Endothelial cell of umbilical vein (primary cell): ENCODE measurements at regions of chr2 and their contacts with region 1.

Region 1: DNA sequence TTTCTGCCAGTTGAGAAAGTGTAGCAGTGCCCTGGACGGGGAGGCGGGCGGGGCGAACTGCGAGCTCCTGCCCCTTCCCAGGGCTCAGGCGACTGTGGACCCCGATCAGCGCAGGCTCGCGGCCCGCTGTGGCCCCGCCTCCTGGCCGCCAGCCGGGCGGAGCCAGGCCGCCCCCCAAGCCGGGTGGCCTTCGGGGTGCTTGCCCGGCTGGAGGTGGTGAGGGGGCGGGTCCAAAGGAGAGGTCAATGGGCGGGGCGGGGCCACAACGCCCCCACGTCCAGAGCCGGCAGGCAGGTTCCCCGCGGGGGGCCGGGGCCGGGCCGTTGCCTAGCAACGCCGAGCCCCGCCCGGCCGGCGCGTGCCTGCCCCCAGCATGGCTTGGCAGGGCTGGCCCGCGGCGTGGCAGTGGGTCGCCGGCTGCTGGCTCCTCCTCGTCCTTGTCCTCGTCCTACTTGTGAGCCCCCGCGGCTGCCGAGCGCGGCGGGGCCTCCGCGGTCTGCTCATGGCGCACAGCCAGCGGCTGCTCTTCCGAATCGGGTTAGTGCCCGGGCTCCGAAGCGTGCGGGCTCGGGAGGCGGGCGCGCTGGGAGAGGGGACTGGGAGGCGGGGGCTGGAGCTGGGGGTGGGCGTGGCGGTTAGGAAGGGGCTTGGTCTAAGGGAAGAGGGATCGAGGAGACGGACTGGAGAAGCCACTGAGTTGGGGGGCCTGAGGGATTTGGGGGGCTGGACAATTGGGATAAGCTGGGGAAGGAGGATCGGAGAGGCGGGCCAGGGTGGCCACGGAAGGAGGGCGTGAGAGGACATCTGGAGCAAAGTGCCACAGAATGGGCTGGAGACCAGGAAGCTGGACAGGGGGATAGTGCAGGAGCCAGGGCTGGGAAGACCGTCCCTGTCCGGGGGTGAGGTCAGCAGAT is 30.8 kb upstream of the TMBIM1 start:
- DNase-seq: peak; percentile 95
- H3K4me3 ChIP-seq: peak overlapping the region; percentile 49 to 71 (median 67)
- H3K27ac ChIP-seq: peak overlapping the region; percentile 91
- H3K4me1 ChIP-seq: peaks cover 24% of the 10 kb centered on the region
- H3K27me3 ChIP-seq: no peaks in the 10 kb centered on the region
- CTCF ChIP-seq: no peak
- POLR2A ChIP-seq: no peak

Region 2: GRCh38 chr2:216949700-216950413 is 1373.3 kb before region 1 on chr2:
- CTCF ChIA-PET with region 1: no interaction called
- POLR2A ChIA-PET with region 1: no interaction called
- dilution Hi-C with region 1: no loop called
- intact Hi-C with region 1: no loop called
- DNase-seq: no peak
- H3K4me3 ChIP-seq: no peak overlapping the region
- H3K27ac ChIP-seq: no peak overlapping the region
- H3K4me1 ChIP-seq: no peaks in the 10 kb centered on the region
- H3K27me3 ChIP-seq: no peaks in the 10 kb centered on the region
- CTCF ChIP-seq: no peak
- POLR2A ChIP-seq: no peak

Region 3: GRCh38 chr2:218292048-218293014 is 30.8 kb before region 1 on chr2 and contains the start of gene TMBIM1:
- CTCF ChIA-PET with region 1: interaction called, 6 read pairs
- POLR2A ChIA-PET with region 1: no interaction called
- dilution Hi-C with region 1: no loop called
- intact Hi-C with region 1: loop called (anchors 1 kb)
- DNase-seq: peak; percentile 69
- H3K4me3 ChIP-seq: peak within 1 kb of the TSS; percentile 69 to 79 (median 74)
- H3K27ac ChIP-seq: peak within 1 kb of the TSS; percentile 63
- H3K4me1 ChIP-seq: peaks cover 63% of the 10 kb centered on the region
- H3K27me3 ChIP-seq: no peaks in the 10 kb centered on the region
- CTCF ChIP-seq: peak; percentile 61 to 97
- POLR2A ChIP-seq: peak; percentile 68
- total RNA-seq, gene TMBIM1: 141 and 159 TPM in 2 replicates

Region 4: DNA sequence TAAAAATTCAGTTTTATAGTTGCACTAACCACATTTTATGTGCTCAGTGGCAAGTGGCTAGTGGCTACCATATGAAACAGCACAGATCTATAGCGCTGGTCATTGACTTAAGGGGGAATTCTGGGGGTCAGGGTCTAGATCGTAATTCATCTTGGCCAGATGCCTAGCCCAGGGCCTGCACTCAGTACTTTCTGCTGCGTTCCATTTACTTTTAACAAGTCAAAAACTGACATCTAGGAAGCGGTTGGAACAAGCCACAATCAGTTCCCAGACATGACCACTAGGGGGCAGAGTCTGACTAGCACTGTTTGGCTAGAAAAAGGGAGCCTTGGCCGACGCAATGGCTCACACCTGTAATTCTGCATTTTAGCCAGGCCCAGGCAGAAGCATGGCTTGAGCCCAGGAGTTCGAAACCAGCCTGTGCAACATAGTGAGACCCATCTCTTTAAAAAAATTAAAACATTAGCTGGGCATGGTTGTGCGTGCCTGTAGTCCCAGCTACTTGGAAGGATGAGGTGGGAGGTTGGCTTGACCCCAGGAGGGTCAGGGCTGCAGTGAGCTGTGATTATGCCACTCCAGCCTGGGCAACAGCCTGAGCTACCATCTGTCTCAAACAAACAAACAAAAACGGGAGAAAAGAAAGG is 21.9 kb before region 1 on chr2:
- CTCF ChIA-PET with region 1: interaction called, 16 read pairs
- POLR2A ChIA-PET with region 1: interaction called, 4 read pairs
- dilution Hi-C with region 1: no loop called
- intact Hi-C with region 1: loop called (anchors 1 kb)
- DNase-seq: peak; percentile 88
- H3K4me3 ChIP-seq: no peak overlapping the region
- H3K27ac ChIP-seq: no peak overlapping the region
- H3K4me1 ChIP-seq: peaks cover 6% of the 10 kb centered on the region
- H3K27me3 ChIP-seq: no peaks in the 10 kb centered on the region
- CTCF ChIP-seq: peak; percentile 86
- POLR2A ChIP-seq: no peak

Region 5: DNA sequence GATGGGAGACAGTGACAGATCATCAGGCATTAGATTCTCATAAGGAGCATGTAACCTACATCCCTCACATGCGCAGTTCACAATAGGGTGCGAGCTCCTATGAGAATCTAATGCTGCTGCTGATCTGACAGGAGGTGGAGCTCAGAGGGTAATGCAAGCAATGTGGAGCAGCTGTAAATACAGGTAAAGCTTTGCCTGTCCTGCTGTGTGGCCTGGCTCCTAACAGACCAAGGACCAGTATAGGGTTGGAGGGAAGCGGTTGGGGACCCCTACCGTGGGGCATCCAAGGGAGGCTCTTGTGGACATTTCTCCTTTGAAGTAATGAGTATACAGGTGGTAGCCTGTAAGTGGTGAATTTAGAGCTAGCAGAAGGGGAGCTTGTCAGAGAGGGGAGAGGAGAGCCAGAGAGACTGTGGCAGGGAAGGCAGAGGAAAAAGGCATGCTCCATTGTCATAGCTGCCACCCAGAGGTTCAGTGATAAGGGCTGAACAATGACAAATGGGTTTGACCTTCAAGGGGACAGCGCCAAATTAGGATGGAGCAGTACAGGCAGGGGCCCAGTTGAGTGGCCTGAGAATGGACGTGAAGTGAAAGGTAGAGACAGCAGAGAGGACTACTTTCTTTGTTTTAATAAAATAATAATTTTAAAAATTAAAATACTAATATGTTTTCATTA is 15.6 kb before region 1 on chr2:
- CTCF ChIA-PET with region 1: interaction called, 16 read pairs
- POLR2A ChIA-PET with region 1: interaction called, 4 read pairs
- dilution Hi-C with region 1: no loop called
- intact Hi-C with region 1: no loop called
- DNase-seq: no peak
- H3K4me3 ChIP-seq: no peak overlapping the region
- H3K27ac ChIP-seq: no peak overlapping the region
- H3K4me1 ChIP-seq: no peaks in the 10 kb centered on the region
- H3K27me3 ChIP-seq: no peaks in the 10 kb centered on the region
- CTCF ChIP-seq: no peak
- POLR2A ChIP-seq: no peak

Region 6: DNA sequence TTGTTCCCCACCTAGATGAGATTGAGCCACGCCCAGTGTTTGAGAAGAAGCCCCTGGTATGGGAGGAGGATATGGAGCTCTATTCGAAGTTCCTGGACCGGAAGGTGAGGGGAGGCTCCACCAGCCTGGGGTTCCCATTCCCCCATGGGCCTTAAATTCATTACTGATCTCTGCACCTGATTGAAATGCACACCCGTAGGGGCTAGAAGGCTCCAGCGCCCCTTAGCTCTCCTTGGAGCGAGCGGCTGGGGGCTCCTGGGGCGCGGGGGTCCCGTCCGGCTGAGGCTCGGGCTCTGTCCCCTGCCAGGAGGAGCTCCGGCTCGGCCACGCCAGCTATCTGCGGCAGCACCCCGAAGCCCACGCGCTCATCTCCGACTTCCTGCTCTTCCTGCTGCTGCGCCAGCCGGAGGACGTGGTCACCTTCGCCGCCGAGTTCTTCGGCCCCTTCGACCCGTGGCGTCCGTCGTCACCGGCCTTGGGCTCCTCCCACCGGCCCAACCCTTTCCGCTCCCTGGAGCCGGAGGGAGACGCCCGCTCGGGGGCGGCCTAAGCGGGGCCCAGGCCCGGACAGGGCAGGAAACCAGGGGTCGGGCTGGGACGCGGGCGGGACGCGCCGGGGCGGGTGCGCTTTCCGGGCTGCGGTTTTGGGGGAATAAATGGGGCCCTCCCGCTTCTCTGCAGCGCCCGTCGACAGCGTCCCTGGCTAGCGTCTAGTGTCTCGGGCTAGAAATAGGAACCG is 44.4 kb after region 1 on chr2:
- CTCF ChIA-PET with region 1: interaction called, 3 read pairs
- POLR2A ChIA-PET with region 1: no interaction called
- dilution Hi-C with region 1: no loop called
- intact Hi-C with region 1: loop called (anchors 2 kb)
- DNase-seq: peak; percentile 53
- H3K4me3 ChIP-seq: peak overlapping the region; percentile 14 to 41 (median 34)
- H3K27ac ChIP-seq: no peak overlapping the region
- H3K4me1 ChIP-seq: no peaks in the 10 kb centered on the region
- H3K27me3 ChIP-seq: no peaks in the 10 kb centered on the region
- CTCF ChIP-seq: no peak
- POLR2A ChIP-seq: peak; percentile 71